Dorsolateral prefrontal cortex (tissue), 120 donors: ENCODE measurements at regions of chr6 and their contacts with region 1.

Region 1: GRCh38 chr6:136526196-136526930 is 23.9 kb downstream of the MAP7 start:
- DNase-seq: peak; percentile 62 to 91 (median 87)
- H3K4me3 ChIP-seq: peak overlapping the region; percentile 35 to 81 (median 66)
- H3K27ac ChIP-seq: peak overlapping the region; percentile 66 to 99 (median 96)
- H3K27me3 ChIP-seq: no peaks in the 10 kb centered on the region
- CTCF ChIP-seq: peak in 48 of 56 donors; percentile 4 to 64 (median 46)

Region 2: DNA sequence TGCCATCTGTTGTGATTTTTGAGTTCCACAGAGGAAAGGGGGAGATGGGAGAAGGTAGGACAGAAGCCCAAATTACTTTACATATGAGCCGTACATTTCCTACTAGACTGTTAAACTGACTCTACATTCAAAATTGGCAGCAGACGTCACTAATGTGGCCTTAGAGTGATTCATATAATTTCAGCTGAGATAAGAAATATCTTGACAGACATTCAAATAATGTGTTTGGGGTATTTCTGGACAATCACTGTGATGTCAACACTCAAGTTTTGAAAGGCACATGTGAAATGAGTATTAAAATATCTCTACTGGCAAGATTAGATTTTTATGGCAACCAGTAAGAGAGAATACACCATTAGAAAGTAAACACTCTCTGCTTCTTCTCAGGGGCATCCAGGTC is 380.2 kb before region 1 on chr6:
- intact Hi-C with region 1: no loop called
- DNase-seq: no peak
- H3K4me3 ChIP-seq: no peak overlapping the region
- H3K27ac ChIP-seq: no peak overlapping the region
- H3K27me3 ChIP-seq: no peaks in the 10 kb centered on the region
- CTCF ChIP-seq: no peak

Region 3: DNA sequence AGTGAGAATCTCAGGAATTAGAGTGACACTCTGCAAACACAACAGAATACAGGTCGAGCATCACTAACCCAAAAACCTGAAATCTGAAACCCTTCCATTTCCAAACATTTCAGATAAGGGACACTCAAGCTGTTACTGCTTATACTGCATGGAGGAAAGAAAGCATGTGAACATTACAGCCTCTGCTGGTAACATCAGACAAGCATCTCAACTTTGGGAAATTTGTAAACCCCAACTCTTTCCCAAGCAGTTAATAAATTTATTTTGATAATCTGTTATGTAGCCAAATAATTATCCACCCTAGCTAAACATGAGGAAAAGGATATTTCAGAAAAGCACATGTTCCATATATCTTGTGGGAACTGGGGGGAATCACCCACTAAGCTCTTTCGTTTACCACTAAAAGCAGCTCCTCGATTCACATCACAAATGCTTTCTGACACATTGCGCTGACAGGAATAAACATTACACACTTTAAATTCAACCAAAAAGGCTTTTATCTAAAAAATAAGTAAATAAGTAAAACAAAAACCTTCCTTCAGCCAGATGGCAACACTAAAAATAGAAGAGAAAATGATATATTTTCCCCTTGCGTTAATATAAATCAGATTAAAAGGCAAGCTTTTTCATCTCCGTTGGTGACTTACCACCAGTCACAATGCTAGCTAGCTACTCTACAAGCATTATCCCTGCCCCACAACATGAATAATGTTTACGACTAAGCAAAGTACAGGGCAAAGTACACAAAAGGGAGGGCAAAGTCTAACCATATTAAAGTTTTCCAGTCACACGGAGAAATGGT is 96.9 kb before region 1 on chr6:
- intact Hi-C with region 1: loop called (anchors 10 kb)
- DNase-seq: no peak
- H3K4me3 ChIP-seq: peak overlapping the region in 14 of 59 donors; percentile 0 to 32 (median 14)
- H3K27ac ChIP-seq: peak overlapping the region in 58 of 59 donors; percentile 46 to 98 (median 90)
- H3K27me3 ChIP-seq: no peaks in the 10 kb centered on the region
- CTCF ChIP-seq: peak in 12 of 56 donors; percentile 9 to 42 (median 15)